ENCODE measurements at regions of chr2 and their contacts with region 1.

Region 1: DNA sequence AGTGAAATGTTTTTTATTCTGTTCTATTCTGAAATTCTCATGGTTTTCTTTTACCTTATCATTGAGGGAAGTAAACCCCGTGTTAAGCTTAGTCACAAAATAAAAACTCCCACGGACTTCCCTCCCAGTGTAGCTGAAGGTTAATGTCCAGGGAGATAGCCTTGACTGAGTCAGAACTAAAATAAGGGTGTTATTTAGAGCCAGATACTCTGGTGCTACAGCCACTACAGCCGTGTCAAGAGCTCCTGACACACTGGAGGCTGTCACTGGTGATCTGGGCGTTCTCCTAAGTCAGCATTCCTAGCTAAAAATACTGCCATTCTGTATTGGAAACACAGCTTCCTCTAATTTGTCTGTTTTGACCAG is 82.0 kb upstream of the RANBP2 start:
- DNase-seq: no peak
- H3K4me3 ChIP-seq: no peak overlapping the region
- H3K27ac ChIP-seq: no peak overlapping the region
- H3K4me1 ChIP-seq: peaks cover 10% of the 10 kb centered on the region
- H3K27me3 ChIP-seq: no peaks in the 10 kb centered on the region
- CTCF ChIP-seq: no peak

Region 2: GRCh38 chr2:108351889-108352288 is 285.4 kb before region 1 on chr2:
- CTCF ChIA-PET with region 1: no interaction called
- POLR2A ChIA-PET with region 1: no interaction called
- intact Hi-C with region 1: loop called (anchors 2 kb)
- DNase-seq: no peak
- H3K4me3 ChIP-seq: no peak overlapping the region
- H3K27ac ChIP-seq: no peak overlapping the region
- H3K4me1 ChIP-seq: no peaks in the 10 kb centered on the region
- H3K27me3 ChIP-seq: no peaks in the 10 kb centered on the region
- CTCF ChIP-seq: no peak

Region 3: DNA sequence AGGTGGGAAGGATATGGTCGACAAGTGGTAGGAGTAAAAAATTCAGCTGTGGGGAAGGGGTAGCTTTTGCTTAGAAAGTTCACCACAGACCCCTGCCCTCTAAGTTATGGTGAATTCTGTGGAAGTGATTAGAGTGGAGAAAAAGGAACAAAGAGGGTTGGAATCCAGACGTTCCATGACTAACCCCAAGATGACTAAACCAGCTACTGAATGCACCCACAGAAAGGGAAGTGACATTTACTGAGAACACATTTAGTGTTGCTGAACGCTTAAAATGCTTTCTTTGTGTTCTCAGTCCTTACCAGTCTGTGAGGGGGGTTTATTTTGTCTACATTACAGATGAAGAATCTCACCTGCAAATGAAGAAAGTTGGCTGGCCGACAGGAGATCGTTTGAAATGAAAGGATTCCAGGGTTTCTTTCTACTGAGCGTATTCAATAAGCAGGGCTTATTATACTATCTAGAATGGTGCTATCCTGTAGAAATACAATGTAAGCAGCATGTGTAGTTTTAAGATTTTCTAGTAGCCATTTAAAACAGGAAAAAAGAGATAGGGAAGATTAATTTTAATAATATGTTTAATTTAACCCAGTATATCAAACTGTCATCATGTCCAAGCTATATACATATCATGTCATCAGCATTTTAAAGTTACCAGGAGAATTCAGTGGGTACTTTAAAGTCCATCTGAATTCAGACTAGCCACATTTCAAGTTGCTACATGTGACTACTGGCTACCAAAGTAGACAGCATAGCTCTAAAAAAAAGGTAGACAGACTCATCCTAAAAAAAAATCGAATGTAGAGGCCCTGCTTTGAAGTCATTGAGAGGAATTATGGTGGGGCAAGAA is 42.9 kb before region 1 on chr2:
- CTCF ChIA-PET with region 1: interaction called, 5 read pairs
- POLR2A ChIA-PET with region 1: no interaction called
- intact Hi-C with region 1: loop called (anchors 2 kb)
- DNase-seq: peak; percentile 10 to 62
- H3K4me3 ChIP-seq: no peak overlapping the region; the same call in 1 of the 2 replicates
- H3K27ac ChIP-seq: peak overlapping the region; percentile 74
- H3K4me1 ChIP-seq: peaks cover 29% of the 10 kb centered on the region
- H3K27me3 ChIP-seq: no peaks in the 10 kb centered on the region
- CTCF ChIP-seq: no peak